AG04449 (cell line): ENCODE measurements at regions of chr17 and their contacts with region 1.

Region 1: DNA sequence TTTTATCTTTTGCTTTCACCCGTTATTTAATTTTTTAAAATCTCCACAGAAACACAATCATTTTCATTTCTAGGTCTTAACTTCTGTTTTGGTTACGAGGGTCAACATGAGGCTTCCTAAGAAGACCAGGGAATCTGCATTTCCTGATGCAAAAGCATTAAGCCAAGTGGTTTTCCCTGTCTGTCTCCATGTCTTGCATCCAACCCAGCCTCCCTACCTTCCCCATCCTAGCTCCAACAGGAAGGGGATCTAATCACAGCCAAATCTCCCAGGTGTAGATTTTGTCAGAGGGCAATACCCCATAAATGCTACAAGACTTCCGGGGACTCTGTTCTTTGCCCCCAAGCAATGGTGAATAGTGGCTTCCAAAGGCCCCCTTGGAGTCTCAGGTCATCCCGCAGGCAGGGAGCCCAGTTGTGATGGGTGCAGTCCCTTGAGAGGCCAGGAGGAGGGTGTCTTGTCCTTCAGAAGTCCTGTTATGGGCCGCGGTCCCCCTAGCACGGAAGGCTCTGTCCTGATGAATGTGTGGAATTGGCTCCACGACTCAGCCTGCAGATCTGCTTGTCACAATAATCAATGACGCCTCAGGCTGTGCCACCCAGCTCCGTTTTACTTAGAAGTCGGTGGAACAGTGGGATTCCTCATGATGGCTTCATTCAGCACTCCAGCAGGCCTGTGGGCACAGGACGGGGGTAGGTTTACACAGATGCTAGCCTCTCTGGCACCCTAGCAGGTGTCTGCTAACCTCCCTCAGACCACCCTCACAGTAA is 141.1 kb downstream of the RGS9 start:
- DNase-seq: no peak
- H3K4me3 ChIP-seq: no peak overlapping the region; the same call in 1 of the 2 replicates
- CTCF ChIP-seq: peak; percentile 84

Region 2: GRCh38 chr17:65556014-65556909 is 278.0 kb after region 1 on chr17:
- CTCF ChIA-PET with region 1: interaction called, 16 read pairs
- POLR2A ChIA-PET with region 1: interaction called, 3 read pairs
- DNase-seq: no peak
- H3K4me3 ChIP-seq: no peak overlapping the region
- CTCF ChIP-seq: peak; percentile 74

Region 3: GRCh38 chr17:65988081-65988850 is 710.0 kb after region 1 on chr17:
- CTCF ChIA-PET with region 1: interaction called, 10 read pairs
- POLR2A ChIA-PET with region 1: no interaction called
- DNase-seq: no peak
- H3K4me3 ChIP-seq: no peak overlapping the region
- CTCF ChIP-seq: peak; percentile 36

Region 4: DNA sequence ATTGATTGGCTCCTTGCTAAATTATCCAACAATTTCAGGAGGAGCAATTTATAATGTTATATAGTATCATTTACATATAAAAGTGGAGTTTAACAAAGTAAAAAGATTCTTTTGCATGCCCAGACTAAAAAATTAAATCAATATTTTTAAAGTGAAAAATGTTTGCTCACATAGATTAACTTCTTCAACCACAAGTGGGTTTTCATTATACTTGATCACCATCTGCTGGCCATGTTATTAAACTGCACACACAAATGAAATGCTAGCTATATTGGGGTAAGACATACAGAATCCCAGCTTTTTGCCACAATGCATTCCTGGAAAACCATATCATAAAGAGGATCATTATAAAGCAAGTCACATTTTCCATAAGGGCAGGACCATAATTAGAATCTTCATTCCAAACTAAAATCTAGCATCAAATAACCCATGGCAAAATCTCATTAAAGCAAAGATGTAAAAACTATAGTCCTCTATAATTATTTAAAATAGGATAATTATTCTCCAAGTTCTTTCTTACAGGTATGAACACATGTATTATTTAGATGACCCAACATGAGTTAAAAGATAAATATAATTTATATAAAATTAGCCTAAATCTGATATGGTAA is 887.4 kb after region 1 on chr17:
- CTCF ChIA-PET with region 1: interaction called, 30 read pairs
- POLR2A ChIA-PET with region 1: no interaction called
- DNase-seq: peak; percentile 16
- H3K4me3 ChIP-seq: no peak overlapping the region
- CTCF ChIP-seq: peak; percentile 46